Psoas muscle (tissue), 8 donors: ENCODE measurements at regions of chr11 and their contacts with region 1.

Region 1: DNA sequence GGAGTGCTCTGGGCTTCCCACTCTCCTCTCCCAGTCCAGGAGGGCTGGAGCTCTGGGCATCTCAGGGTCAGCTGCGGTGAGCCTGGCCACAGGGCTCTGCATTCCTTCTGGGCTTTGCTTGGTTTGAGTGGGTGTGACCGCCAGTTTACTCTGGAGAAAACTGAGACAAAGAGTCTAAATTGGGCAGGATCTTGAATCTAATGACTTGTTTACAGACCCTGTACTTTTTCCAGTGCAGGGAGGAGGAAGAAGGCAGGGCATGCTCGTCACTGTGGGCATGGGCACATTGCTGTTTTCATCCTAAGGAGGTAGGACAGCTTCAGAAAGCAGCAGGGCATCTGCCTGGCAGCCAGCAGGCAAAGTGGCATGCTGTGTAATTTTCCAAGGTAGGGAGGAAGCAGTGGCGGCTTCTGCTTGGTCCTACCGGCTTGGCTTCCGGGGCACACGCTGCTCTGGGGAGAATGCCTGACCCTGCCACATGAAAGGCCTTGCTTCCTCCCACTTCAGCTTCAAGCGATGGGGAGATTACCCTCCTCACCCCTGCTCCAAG is 22.9 kb downstream of the FLI1 start:
- DNase-seq: no peak
- ATAC-seq: peak in 1 of 4 donors; percentile 22
- H3K4me3 ChIP-seq: no peak overlapping the region
- H3K27ac ChIP-seq: peak overlapping the region; percentile 57
- H3K4me1 ChIP-seq: peaks cover 25% of the 10 kb centered on the region
- H3K27me3 ChIP-seq: no peaks in the 10 kb centered on the region
- CTCF ChIP-seq: no peak

Region 2: DNA sequence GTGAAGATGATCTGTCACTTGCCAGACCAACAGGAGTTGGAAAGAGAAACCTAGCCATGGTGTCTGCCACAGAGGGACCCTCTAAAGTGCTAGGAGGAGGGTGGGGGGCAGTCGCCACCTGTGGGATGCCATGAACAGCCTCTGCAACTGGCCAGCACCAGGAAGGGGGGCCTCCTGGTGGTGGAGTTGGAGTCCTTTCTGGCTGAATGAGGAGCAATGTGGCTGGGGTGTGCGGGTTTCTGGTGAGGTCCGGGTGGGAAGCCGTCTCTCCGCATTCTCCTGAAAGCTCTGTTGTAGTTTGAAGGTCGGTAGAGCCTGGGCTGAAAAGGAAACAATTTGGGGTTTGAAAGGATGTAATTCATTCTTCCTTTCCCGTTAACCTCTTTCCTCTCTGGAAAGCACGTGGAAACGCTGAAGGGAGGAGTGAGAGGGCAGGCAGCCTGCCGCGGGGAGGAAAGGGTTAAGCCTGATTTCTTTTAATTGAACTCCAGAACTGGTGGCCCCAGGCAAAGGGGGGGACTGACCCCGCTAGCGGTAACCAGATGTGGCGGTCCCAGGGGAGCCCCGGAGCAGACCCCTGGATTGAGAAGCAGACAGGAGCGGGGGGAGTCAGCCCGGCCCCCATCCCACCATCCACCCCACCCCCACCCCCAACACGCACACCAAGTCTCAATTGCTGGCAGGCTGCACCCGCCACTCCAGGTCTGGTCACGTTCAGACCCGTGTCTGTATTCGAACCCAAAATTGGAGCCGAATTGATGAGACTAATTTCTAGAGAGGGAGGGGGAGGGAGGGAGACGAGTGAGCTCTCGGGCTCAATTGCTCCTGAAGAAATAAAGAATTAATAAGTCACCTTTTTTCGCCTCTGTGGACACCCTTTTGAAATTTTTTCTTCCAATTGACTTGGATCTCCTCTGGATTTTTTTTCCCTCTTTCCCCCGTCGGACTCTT is 24.7 kb before region 1 on chr11:
- intact Hi-C with region 1: loop called in 1 of 2 experiments (anchors 2 kb)
- DNase-seq: peak in 1 of 2 donors; percentile 50
- ATAC-seq: no peak
- H3K4me3 ChIP-seq: peak overlapping the region; percentile 74
- H3K27ac ChIP-seq: peak overlapping the region; percentile 56
- H3K4me1 ChIP-seq: peaks cover 18% of the 10 kb centered on the region
- H3K27me3 ChIP-seq: peaks cover 0 to 82% (median 17%) of the 10 kb centered on the region in 3 donors
- CTCF ChIP-seq: peak; percentile 5

Region 3: DNA sequence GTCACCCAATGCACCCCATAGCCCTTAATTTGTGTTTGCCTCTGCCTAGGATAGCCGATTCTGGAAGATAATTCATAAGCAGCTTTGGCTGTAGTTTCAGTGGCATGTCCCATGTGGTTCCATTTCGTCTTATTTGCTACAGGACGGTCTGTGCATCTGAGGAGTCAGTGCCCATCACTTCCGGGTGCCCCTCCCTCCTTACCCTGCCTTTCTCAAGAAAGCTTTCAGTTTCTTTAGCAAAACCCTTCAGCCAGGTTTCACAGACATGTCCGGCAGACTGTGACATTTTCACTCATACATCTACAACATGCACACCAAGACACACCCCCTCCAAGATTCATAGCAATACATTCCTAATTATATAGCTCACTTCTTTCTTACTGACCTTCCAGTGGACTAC is 211.7 kb after region 1 on chr11:
- intact Hi-C with region 1: no loop called
- DNase-seq: no peak
- ATAC-seq: no peak
- H3K4me3 ChIP-seq: no peak overlapping the region
- H3K27ac ChIP-seq: no peak overlapping the region
- H3K4me1 ChIP-seq: no peaks in the 10 kb centered on the region
- H3K27me3 ChIP-seq: peaks cover 0 to 3% (median 0%) of the 10 kb centered on the region in 3 donors
- CTCF ChIP-seq: no peak